ENCODE measurements at regions of chr19 and their contacts with region 1.

Region 1: DNA sequence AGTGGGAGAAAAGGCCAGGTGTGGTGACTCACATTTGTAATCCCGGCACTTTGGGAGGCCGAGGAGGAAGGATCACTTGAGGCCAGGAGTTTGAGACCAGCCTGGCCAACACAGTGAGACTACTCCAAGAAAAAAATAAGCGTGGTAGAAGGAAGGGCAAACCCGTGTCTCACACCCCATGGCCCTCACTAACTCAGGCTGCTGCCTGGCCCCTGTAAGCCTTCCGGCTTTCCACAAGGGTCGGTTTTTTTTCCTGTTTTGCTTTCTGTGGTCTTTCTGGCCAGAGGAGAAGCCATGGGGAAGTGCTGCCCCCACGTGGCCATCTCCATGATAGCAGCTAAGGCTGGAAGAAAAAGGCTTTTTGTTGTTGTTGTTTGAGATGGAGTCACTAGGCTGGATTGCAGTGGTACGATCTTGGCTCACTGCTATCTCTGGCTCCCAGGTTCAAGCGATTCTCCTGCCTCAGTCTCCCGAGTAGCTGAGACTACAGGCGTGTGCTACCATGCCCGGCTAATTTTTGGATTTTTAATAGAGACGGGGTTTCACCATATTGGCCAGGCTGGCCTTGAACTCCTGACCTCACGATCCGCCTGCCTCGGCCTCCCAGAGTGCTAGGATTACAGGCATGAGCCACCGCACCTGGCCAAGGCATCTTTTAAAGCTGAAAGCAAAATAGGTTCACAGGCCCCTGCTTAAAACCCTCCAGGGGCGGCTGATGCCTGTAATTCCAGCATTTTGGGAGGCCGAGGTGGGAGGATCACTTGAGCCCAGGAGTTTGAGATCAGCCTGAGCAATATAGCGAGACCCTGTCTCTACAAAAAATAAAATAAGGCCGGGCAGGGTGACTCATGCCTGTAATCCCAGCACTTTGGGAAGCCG is 7.5 kb upstream of the ARHGEF18 start:
- DNase-seq: peak; percentile 73
- H3K4me3 Mint-ChIP-seq: no peak overlapping the region
- H3K27ac Mint-ChIP-seq: no peak overlapping the region
- H3K4me1 Mint-ChIP-seq: peaks cover 51% of the 10 kb centered on the region
- H3K27me3 Mint-ChIP-seq: peaks cover 9% of the 10 kb centered on the region

Region 2: DNA sequence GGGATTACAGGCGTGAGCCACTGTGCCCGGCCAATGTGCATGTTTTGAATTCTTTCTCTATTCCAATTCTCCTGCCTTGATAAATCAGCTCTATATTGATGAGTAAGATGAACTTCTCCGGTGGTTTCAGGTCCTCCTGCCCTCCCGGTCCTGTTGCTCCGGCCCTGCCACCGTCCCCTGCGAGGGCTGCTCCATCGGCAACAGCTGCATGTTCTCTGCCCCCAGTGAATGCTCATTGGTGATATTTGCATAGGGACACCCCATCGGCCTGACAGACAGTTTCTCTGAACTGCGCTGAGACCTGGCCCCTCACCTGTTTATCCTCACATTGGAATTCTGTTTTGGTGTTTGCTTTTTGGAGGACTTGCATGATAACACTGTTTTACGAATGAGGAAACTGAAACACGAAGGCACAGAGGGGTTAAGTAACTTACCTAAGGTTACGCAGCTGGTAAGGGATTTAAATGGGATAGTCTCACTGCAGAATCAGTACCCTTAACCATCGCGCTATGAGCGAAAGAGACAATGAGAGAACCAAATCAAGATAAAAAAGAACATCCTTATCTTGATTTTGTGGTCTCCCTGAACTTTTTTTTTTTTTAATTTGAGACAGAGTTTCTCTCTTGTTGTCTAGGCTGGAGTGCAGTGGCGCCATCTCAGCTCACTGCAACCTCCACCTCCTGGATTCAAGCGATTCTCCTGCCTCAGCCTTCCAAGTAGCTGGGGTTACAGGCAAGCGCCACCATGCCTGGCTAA is 239.5 kb before region 1 on chr19:
- intact Hi-C with region 1: loop called (anchors 1 kb)
- DNase-seq: no peak
- H3K4me3 Mint-ChIP-seq: peak overlapping the region; percentile 7
- H3K27ac Mint-ChIP-seq: no peak overlapping the region
- H3K4me1 Mint-ChIP-seq: peaks cover 19% of the 10 kb centered on the region
- H3K27me3 Mint-ChIP-seq: peaks cover 10% of the 10 kb centered on the region

Region 3: GRCh38 chr19:7149956-7150705 is 191.1 kb before region 1 on chr19:
- intact Hi-C with region 1: loop called (anchors 1 kb)
- DNase-seq: no peak
- H3K4me3 Mint-ChIP-seq: no peak overlapping the region
- H3K27ac Mint-ChIP-seq: no peak overlapping the region
- H3K4me1 Mint-ChIP-seq: no peaks in the 10 kb centered on the region
- H3K27me3 Mint-ChIP-seq: no peaks in the 10 kb centered on the region

Region 4: DNA sequence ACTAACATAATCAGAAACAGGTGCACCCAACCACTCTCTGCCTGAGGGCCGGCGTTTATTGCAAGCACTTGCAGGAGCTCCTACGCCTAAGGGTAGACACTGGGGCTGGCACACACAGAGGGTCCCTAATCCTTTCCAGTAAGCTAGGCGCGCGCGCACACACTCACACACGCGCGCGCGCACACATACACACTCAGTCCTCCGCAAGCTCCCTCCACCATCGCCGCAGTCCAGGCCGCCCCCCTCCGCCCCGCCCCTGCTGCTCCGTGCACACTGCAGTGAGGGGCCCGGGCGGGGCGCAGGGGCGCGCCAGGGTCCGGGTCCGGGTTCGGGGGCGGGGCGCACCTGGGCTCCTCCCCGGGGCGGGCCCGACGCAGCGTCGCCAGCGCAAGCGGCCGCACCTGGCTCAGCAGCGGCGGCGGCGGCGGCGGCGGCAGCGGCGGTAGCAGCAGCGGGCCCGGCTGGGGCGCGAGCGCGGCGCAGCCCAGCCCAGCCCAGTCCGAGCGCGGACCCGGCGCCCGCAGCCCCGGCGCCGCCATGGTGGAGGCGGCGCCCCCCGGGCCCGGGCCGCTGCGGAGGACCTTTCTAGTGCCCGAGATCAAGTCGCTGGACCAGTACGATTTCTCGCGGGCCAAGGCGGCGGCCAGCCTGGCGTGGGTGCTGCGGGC is 254.4 kb after region 1 on chr19 and contains the start of gene CAMSAP3:
- intact Hi-C with region 1: no loop called
- DNase-seq: no peak
- H3K4me3 Mint-ChIP-seq: peak within 1 kb of the TSS; percentile 45
- H3K27ac Mint-ChIP-seq: no peak within 1 kb of the TSS
- H3K4me1 Mint-ChIP-seq: no peaks in the 10 kb centered on the region
- H3K27me3 Mint-ChIP-seq: peaks cover 30% of the 10 kb centered on the region
- total RNA-seq, gene CAMSAP3: 0.23 and 0.55 TPM in 2 replicates